Sciatic nerve (tissue), 2 donors: ENCODE measurements at regions of chr6 and their contacts with region 1.

Region 1: DNA sequence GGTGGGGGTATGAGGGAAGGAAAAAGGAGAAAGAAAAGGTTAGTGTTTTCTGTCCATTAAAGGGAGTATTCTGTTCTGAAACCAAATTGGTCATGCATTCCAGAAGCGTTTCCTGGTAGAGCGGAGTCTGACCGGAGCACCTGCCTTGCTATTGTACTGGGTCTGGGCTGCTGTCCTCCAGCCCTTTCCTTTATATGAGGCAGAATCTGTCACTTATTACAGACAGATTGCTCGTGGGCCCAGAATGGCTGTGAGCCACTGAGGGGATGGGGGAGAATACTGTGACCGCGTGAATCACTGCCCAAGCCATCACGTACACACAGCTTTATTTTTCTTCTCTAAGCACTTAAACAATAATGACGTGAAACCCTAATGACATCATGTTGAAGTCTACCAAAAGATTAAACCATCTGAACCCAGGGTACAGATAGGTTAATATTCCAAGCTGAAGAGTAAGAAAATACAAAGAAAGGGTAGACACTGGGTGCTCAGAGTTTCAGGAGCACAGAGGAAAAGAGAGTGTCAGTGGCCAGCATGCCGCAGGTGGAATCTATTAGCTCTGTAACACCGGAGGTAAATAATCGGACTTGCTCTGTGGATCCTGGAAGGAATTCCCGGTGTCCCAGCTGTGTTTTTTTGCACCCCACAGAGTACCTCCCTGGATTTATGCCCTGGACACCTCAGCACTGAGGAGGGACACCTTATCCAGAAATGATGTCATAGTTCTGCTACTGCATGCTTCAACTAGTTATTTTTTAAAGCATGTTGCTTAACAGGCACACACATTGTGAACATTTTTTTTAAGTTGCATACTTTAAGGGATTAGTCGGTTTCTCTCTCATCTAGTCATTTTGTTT is 573.3 kb downstream of the PKHD1 start:
- DNase-seq: no peak
- ATAC-seq: no peak

Region 2: GRCh38 chr6:51562198-51562597 is 48.1 kb after region 1 on chr6:
- intact Hi-C with region 1: loop called (anchors 2 kb)
- DNase-seq: no peak
- ATAC-seq: no peak

Region 3: DNA sequence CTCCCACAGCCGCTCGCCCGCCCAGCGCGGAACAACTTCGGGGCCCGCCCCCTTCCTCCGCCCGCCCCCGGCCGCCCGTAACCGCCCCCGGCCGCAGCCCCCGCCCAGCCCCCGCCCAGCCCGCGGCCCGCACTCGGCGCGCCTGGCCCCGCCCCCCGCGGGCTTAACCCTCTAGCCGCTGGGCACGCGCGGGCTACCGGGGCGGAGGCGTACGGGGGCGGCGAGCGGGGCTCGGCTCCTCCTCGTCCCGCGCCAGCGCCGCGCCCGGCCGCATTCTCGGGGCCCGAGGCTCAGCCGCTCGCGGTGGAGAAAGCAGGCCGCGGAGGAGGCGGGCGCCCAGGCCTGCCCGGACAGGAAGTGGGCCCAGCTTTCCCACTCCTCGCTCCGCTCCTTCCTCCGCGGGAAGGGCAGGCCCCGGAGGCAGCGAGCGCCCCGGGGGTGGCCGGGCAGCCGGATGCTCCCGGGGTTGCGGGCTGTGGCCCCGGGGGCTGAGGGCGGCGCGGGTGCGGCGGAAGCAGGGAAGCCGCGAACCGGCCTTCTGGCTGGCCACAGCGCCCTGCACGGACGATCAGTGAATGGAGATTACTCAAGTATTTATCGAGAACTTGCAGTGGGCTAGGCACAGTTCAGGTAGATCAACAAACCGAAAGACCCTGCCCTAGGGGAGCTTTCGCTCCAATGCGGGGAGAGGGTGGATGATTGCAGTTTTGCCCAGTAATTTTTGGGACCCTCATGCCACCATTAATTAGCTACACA is 1063.1 kb after region 1 on chr6 and contains the start of gene TRAM2:
- intact Hi-C with region 1: no loop called
- DNase-seq: peak; percentile 89
- ATAC-seq: peak; percentile 77
- total RNA-seq, gene TRAM2: 18.6 TPM